GM12878 (cell line): ENCODE measurements at regions of chr11 and their contacts with region 1.

Region 1: GRCh38 chr11:77473801-77474683 is at the start of gene PAK1:
- DNase-seq: no peak
- ATAC-seq: peak; percentile 86
- H3K4me3 ChIP-seq: peak within 1 kb of the TSS; percentile 92
- H3K27ac ChIP-seq: peak within 1 kb of the TSS; percentile 82
- H3K4me1 ChIP-seq: peaks cover 14% of the 10 kb centered on the region
- H3K27me3 ChIP-seq: no peaks in the 10 kb centered on the region
- CTCF ChIP-seq: peak; percentile 16 to 38 (median 36); a peak in 4 of 6 replicates
- EP300 ChIP-seq: peak; percentile 35 to 53; a peak in 2 of 4 replicates
- POLR2A ChIP-seq: peak; percentile 64
- RAD21 ChIP-seq: 0 out of 2 replicates have a peak, but pooled peaks have one; percentile 2
- polyA plus RNA-seq, gene PAK1: 43.8 to 49.4 TPM

Region 2: GRCh38 chr11:77406396-77406795 is 67.6 kb before region 1 on chr11:
- CTCF ChIA-PET with region 1: interaction called, 47 read pairs
- POLR2A ChIA-PET with region 1: interaction called, 29 read pairs
- RAD21 ChIA-PET with region 1: interaction called, 83 read pairs
- SMC1A ChIA-PET with region 1: interaction called, 98 read pairs
- in situ Hi-C with region 1: no loop called
- intact Hi-C with region 1: loop called (anchors 2 kb)
- DNase-seq: no peak
- ATAC-seq: no peak
- H3K4me3 ChIP-seq: no peak overlapping the region
- H3K27ac ChIP-seq: no peak overlapping the region
- H3K4me1 ChIP-seq: peaks cover 15% of the 10 kb centered on the region
- H3K27me3 ChIP-seq: no peaks in the 10 kb centered on the region
- CTCF ChIP-seq: no peak
- EP300 ChIP-seq: no peak
- POLR2A ChIP-seq: no peak
- RAD21 ChIP-seq: no peak

Region 3: DNA sequence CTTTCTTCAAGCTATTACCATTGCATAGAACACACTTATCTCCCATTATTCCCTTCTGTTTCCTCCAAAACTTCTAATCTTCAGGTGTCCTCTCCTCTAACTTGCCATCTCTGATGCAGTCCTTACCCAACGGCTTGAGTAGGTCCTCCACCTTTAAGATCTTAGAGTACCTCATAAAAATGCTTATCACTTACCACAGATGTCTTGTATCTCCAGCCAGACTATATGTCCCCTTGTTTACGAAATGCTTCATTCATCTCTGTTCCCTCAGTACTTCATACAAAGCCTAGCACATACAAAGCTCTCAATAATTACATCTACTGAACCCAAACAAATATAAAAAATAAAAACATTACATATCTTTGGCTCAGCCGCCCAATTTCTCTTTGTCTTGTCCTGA is 49.4 kb before region 1 on chr11:
- CTCF ChIA-PET with region 1: interaction called, 13 read pairs
- POLR2A ChIA-PET with region 1: interaction called, 3 read pairs
- RAD21 ChIA-PET with region 1: interaction called, 10 read pairs
- SMC1A ChIA-PET with region 1: interaction called, 16 read pairs
- in situ Hi-C with region 1: no loop called
- intact Hi-C with region 1: no loop called
- DNase-seq: no peak
- ATAC-seq: no peak
- H3K4me3 ChIP-seq: no peak overlapping the region
- H3K27ac ChIP-seq: no peak overlapping the region
- H3K4me1 ChIP-seq: peaks cover under 1% of the 10 kb centered on the region
- H3K27me3 ChIP-seq: no peaks in the 10 kb centered on the region
- CTCF ChIP-seq: no peak
- EP300 ChIP-seq: no peak
- POLR2A ChIP-seq: no peak
- RAD21 ChIP-seq: no peak

Region 4: DNA sequence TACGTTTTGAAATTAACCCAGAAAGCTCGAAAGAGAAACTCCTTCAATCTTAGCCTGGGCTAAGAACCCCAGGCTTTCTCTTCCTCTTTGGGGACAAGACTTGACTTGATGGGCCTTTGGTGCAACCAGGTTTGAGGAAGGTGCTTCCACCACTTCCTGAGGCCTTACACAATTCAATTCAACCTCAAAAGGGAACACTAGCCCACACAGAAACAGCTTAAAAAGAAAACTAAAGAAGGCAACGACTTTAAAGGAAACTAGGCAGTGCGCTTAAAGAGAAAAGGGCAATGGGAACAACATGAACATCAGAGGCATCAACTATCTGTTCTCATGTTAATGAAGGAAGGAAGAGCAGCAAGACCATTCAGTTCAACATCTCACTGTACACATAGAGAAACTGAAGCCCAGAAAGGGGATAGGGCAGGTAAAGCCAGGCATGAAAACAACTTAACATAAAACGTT is 25.0 kb before region 1 on chr11:
- CTCF ChIA-PET with region 1: interaction called, 119 read pairs
- POLR2A ChIA-PET with region 1: interaction called, 100 read pairs
- RAD21 ChIA-PET with region 1: interaction called, 162 read pairs
- SMC1A ChIA-PET with region 1: interaction called, 289 read pairs
- in situ Hi-C with region 1: no loop called
- intact Hi-C with region 1: loop called (anchors 2 kb)
- DNase-seq: peak; percentile 91
- ATAC-seq: peak; percentile 76
- H3K4me3 ChIP-seq: peak overlapping the region; percentile 8; the same call in 1 of the 2 replicates
- H3K27ac ChIP-seq: peak overlapping the region; percentile 92
- H3K4me1 ChIP-seq: peaks cover 76% of the 10 kb centered on the region
- H3K27me3 ChIP-seq: no peaks in the 10 kb centered on the region
- CTCF ChIP-seq: no peak
- EP300 ChIP-seq: peak in 1 of 2 experiments; percentile 76; a peak in 3 of 4 replicates
- POLR2A ChIP-seq: no peak
- RAD21 ChIP-seq: peak; percentile 14; the same call in 1 of the 2 replicates

Region 5: DNA sequence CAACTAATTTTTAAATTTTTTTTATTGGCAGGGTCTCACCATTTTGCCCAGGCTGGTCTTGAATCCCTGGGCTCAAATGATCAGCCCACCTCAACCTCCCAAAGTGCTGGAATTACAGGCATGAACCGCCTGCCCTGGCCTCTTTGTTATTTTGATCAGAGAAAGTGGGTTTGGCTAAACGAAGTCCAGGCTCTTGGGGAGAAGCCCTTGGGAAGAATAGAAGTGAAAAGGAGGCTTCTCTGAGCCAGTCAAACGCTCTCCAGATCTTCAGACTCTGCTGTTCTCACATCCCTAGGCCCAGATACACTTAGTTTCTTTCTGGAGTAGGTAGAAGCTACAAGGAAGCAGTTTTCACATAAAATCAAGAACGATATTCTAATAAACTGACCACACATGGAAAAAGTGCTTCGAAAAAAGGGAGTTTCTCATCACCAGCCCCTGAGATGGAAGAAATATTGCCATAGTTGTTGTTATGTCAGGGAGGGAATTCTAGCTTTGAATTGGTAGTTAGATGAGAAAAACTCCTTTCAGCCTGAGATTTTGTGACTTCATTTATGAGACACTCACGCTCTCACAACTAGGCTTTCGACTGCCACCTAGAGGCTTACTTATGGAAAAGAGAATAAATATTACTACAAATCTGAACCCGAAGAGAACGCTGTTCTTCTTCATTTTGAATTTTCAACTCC is 74.0 kb after region 1 on chr11:
- CTCF ChIA-PET with region 1: interaction called, 21 read pairs
- POLR2A ChIA-PET with region 1: interaction called, 3 read pairs
- RAD21 ChIA-PET with region 1: interaction called, 21 read pairs
- SMC1A ChIA-PET with region 1: interaction called, 17 read pairs
- in situ Hi-C with region 1: no loop called
- intact Hi-C with region 1: no loop called
- DNase-seq: peak; percentile 38
- ATAC-seq: peak; percentile 83
- H3K4me3 ChIP-seq: no peak overlapping the region
- H3K27ac ChIP-seq: no peak overlapping the region
- H3K4me1 ChIP-seq: no peaks in the 10 kb centered on the region
- H3K27me3 ChIP-seq: no peaks in the 10 kb centered on the region
- CTCF ChIP-seq: peak; percentile 46 to 76 (median 59); a peak in 5 of 6 replicates
- EP300 ChIP-seq: no peak
- POLR2A ChIP-seq: no peak
- RAD21 ChIP-seq: peak; percentile 92